Activated CD4-positive, alpha-beta memory T cell treated with anti-CD3 and anti-CD28 coated beads for 36 hours (primary cell): ENCODE measurements at regions of chr19 and their contacts with region 1.

Region 1: DNA sequence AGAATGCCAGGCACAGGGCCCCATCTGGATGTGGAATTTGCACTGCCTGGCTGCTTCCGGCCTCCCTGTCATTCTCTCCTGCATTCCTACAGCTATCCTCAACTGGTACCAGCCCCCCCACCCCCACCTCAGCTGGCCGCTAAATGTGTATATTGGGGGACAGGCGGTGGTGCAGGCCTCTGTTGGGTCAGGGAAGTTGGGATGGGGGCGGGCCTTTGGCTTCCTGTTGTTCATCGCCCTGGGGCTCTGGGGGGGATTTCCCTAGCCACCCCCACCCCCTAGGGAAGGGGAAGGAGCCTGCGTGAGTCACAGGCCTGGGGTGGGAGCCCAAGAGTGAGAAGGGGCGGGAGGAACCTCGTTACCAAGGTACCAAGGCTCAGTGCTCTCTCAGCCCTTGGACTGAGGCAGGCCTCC is 10.6 kb downstream of the POU2F2 start:
- DNase-seq: peak; percentile 94
- H3K4me3 Mint-ChIP-seq: peak overlapping the region; percentile 82
- H3K27ac Mint-ChIP-seq: peak overlapping the region; percentile 97
- H3K4me1 Mint-ChIP-seq: peaks cover 60% of the 10 kb centered on the region
- H3K27me3 Mint-ChIP-seq: no peaks in the 10 kb centered on the region

Region 2: DNA sequence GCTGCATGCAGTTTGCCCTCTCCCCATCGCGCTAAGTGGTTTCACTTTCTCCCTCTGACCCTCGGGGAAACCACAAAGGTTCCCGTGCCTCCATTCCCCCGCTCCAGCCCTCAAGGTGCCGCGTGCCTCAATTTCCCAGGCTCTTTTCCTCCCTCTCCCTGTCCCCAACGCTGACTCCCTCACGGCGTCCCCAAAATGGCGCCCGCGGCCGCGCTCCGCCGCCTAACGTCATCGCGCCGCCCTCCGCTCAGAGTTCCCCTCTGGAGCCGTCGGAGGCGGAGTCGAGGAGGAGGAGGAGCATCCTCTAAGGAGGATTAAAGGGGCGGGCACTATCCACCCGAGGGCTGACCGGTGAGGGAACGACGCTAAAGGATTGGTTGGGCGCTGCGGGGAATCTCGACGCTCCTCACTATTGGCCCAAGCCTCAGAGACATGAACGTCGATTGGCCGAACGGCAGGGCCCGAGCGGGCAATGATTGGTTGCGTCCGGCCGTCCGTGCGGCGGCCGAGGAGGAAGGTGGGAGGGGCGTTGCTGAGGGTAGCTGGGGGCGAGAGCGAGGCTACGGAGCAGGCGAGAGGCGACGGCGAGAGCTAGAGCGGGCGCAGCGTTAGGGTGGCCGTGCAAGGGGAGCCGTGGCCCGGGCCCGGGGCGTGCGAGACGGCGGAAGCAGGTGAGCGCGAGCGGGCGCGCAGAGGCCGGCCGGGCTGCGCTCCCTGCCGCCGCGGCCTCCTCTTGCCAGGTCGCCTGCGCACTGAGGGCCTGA is 45.9 kb before region 1 on chr19 and contains the start of gene ZNF574:
- CTCF ChIA-PET with region 1: no interaction called
- POLR2A ChIA-PET with region 1: no interaction called
- intact Hi-C with region 1: loop called (anchors 2 kb)
- DNase-seq: peak; percentile 99
- H3K4me3 Mint-ChIP-seq: peak within 1 kb of the TSS; percentile 99
- H3K27ac Mint-ChIP-seq: peak within 1 kb of the TSS; percentile 99
- H3K4me1 Mint-ChIP-seq: peaks cover 35% of the 10 kb centered on the region
- H3K27me3 Mint-ChIP-seq: no peaks in the 10 kb centered on the region
- total RNA-seq, gene ZNF574: 12.2 to 13.2 TPM

Region 3: DNA sequence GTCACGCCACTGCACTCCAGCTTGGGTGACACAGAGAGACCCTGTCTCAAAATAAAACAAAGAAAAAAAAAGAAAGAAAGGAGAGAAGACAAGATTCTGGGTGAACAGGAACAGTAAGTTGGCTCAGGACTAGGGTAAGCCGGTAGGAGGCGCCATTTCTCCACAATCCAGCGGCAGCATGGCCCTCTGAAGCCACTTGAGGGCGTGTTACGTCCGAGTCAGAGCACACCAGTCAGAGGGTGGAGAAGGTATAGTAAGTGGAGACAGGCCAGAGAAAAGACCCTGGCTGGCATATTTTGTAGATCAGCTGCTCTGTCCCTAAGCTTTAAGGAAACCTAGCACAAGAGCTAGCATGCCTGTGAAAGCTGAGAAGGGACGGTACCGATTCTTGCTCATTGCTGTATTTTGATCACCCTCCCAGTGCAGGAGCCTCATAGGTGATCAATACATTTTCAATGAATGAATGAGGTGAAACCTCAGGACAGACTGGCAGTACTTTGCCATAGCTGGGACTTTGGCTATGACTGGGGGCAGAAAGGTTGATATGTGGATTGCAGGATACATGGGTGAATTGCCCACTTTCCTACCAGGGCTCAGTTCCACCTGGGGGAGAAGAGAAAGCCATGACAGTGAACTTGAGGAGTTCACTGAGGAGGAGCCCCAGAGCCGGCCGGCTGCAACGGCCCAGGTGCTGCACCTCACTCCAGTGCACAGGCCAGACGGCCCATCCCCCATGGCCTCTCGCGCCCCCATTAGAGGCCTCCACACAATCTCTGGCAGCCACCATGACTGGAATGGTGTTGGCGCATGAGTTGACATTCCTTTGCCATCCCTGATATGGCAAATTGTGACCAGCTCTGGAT is 12.9 kb before region 1 on chr19:
- CTCF ChIA-PET with region 1: interaction called, 82 read pairs
- POLR2A ChIA-PET with region 1: interaction called, 3 read pairs
- intact Hi-C with region 1: loop called (anchors 1 kb)
- DNase-seq: peak; percentile 94
- H3K4me3 Mint-ChIP-seq: no peak overlapping the region
- H3K27ac Mint-ChIP-seq: no peak overlapping the region
- H3K4me1 Mint-ChIP-seq: peaks cover 55% of the 10 kb centered on the region
- H3K27me3 Mint-ChIP-seq: no peaks in the 10 kb centered on the region

Region 4: DNA sequence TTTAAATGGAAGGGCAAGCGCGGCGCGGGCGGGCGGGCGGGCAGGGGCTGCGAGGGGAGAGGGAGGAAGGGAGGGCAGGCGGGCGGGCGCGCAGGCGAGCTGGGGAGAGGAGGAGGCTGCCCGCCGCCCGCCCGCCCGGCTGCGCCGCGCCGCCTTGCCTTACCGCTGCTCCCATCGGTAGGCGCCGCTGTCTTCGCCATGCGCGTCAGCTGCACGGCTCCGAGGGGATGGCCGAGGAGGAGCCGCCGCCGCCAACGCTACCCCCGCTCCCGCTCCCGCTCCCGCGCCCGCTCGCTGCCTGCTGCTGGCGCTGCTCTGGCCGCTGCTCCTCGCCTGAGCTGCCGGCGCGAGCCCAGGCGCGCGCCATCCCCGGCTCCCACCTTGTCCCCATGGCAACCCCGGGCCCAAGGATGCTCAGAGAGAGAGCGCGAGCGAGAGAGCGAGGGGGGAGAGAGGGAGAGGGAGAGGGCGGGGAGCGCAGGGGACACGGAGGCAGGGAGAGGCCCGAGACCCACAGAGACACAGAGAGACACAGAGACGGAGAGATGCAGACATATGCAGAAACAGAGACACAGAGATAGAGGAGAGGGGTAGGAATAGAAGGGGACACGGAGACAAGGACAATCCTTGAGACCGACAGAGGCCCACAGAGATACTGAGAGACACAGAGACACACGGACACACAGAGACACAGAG is 55.5 kb after region 1 on chr19:
- CTCF ChIA-PET with region 1: interaction called, 11 read pairs
- POLR2A ChIA-PET with region 1: no interaction called
- intact Hi-C with region 1: no loop called
- DNase-seq: peak; percentile 85
- H3K4me3 Mint-ChIP-seq: no peak overlapping the region
- H3K27ac Mint-ChIP-seq: no peak overlapping the region
- H3K4me1 Mint-ChIP-seq: peaks cover 14% of the 10 kb centered on the region
- H3K27me3 Mint-ChIP-seq: peaks cover 11% of the 10 kb centered on the region

Region 5: DNA sequence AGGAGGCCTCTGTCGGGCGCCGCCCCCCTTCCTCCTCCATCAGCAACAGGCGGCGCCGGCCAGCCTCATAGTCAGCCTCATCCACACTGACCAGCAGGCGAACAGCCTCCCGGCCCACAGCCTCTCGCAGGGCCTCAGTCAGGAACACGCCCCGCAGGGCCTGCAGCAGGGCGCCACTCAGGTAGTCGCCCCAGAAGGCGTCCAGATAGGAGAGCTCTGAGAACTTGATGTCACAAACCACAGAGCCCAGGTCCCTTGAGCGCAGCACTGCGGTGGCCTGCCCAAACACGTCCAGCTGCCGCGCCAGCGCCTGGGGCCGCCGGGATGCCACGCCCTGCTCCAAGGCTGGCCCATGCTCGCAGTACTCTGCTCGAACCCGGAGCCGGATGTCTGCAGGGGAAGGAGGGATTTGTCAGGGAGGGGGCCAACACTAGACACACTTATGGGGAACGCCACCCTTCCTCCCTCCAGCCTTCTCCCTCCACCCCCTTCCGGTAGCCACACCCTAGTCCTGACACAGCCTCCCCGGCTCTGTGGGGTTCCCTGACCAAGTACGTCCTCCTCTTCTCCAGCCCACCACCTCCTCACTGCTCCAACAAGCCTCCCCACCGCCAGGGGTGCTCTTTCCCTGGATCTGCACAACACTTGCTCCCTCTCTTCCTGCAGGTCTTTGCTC is 77.9 kb after region 1 on chr19:
- CTCF ChIA-PET with region 1: no interaction called
- POLR2A ChIA-PET with region 1: no interaction called
- intact Hi-C with region 1: loop called (anchors 2 kb)
- DNase-seq: peak; percentile 86
- H3K4me3 Mint-ChIP-seq: peak overlapping the region; percentile 65
- H3K27ac Mint-ChIP-seq: peak overlapping the region; percentile 98
- H3K4me1 Mint-ChIP-seq: peaks cover 80% of the 10 kb centered on the region
- H3K27me3 Mint-ChIP-seq: no peaks in the 10 kb centered on the region

Region 6: GRCh38 chr19:42396381-42397262 is 275.0 kb after region 1 on chr19:
- CTCF ChIA-PET with region 1: no interaction called
- POLR2A ChIA-PET with region 1: no interaction called
- intact Hi-C with region 1: loop called (anchors 5 kb)
- DNase-seq: peak; percentile 99
- H3K4me3 Mint-ChIP-seq: peak overlapping the region; percentile 83
- H3K27ac Mint-ChIP-seq: peak overlapping the region; percentile 87
- H3K4me1 Mint-ChIP-seq: peaks cover 35% of the 10 kb centered on the region
- H3K27me3 Mint-ChIP-seq: no peaks in the 10 kb centered on the region